ENCODE measurements at regions of chr6 and their contacts with region 1.

Region 1: GRCh38 chr6:140052756-140053729 is 678.6 kb upstream of the CITED2 start:
- DNase-seq: peak; percentile 79
- H3K4me3 ChIP-seq: no peak overlapping the region
- H3K27ac ChIP-seq: peak overlapping the region; percentile 98
- H3K4me1 ChIP-seq: peaks cover 50% of the 10 kb centered on the region
- H3K27me3 ChIP-seq: no peaks in the 10 kb centered on the region
- CTCF ChIP-seq: peak; percentile 71

Region 2: DNA sequence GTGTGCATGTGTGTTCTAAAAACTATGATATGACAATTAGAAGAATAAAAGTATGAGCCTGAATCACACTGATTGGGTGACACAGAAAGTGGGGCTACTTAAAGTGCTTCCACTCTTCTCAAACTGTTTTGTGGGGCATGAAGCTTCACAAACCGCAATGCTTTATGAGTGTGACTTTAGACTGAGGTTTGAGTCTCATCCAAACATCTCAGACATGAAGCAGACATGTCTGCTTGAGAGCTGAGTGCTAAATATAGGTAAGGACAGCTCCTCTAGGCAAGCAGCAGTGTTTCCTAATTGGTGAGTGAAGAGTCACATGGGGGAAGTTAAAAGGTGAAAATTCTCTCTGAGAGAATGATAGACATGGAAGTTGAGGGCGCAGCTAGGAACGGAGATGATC is 48.3 kb after region 1 on chr6:
- CTCF ChIA-PET with region 1: no interaction called
- POLR2A ChIA-PET with region 1: interaction called, 16 read pairs
- intact Hi-C with region 1: no loop called
- DNase-seq: no peak
- H3K4me3 ChIP-seq: no peak overlapping the region
- H3K27ac ChIP-seq: no peak overlapping the region
- H3K4me1 ChIP-seq: peaks cover 10% of the 10 kb centered on the region
- H3K27me3 ChIP-seq: no peaks in the 10 kb centered on the region
- CTCF ChIP-seq: no peak

Region 3: DNA sequence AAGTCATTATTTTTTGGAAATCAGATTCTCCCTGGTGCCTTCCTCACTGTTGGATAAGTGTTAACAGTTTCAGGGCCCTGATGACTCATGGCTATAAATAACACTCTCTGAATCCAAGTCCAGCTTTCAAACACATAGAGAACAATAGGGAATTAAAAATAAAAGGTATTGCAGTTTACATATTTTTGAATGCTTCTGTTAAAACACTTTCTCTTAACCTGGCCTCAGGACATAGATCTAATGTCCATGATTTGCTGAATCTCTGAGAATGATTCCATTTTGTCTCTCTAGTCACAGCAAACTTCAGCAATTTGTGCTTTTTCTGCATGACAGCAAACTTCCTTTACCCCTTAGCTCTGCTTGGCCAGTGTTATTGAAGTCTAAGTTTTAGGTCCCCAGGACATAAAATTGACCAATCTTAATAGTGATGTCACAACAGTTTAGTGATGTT is 513.8 kb after region 1 on chr6:
- CTCF ChIA-PET with region 1: no interaction called
- POLR2A ChIA-PET with region 1: no interaction called
- intact Hi-C with region 1: loop called (anchors 10 kb)
- DNase-seq: peak; percentile 60
- H3K4me3 ChIP-seq: no peak overlapping the region
- H3K27ac ChIP-seq: peak overlapping the region; percentile 15
- H3K4me1 ChIP-seq: peaks cover 29% of the 10 kb centered on the region
- H3K27me3 ChIP-seq: no peaks in the 10 kb centered on the region
- CTCF ChIP-seq: no peak

Region 4: GRCh38 chr6:140636908-140637402 is 583.9 kb after region 1 on chr6:
- CTCF ChIA-PET with region 1: no interaction called
- POLR2A ChIA-PET with region 1: no interaction called
- intact Hi-C with region 1: loop called (anchors 10 kb)
- DNase-seq: no peak
- H3K4me3 ChIP-seq: peak overlapping the region; percentile 18
- H3K27ac ChIP-seq: peak overlapping the region; percentile 87
- H3K4me1 ChIP-seq: peaks cover 19% of the 10 kb centered on the region
- H3K27me3 ChIP-seq: no peaks in the 10 kb centered on the region
- CTCF ChIP-seq: no peak

Region 5: DNA sequence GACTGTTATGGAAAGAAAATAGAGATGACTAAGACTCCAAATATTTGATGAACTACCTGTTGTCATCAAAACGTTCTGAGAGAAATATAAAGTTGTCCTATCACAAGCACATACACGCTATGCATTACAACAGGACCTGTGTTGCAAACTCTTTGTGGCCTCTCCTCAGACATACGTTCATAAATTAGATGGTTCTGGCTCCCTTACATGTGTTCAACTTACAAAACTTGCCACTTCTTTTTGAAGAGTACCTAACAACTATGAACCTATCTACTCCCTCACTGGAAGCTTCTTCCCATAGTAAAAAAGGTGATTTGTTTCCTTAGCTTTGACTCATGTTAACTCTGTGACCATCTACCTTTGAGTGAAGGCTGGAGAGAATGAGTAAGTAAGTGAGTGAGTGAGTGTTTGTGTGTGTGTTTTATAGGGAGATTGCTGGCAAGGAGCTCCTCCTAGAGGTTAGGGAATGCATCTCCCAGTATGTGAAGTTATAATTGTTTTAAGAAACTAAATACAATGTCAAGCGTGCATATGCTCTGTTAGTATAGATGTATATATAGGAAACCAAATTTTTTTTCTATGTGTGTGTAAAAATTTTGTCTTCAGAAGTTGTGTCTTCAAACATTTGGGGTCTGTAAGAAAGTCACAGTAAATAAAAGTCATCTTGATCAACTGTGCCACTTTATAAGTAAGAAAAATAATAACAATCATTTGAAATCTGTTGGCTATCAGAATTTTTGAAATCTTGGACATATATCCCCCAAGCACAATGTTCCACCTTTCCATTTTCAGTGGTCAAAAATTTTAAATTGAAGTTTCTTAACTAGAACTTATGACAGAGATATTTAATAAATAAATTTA is 868.6 kb after region 1 on chr6:
- CTCF ChIA-PET with region 1: no interaction called
- POLR2A ChIA-PET with region 1: no interaction called
- intact Hi-C with region 1: loop called (anchors 2 kb)
- DNase-seq: peak; percentile 84
- H3K4me3 ChIP-seq: no peak overlapping the region
- H3K27ac ChIP-seq: peak overlapping the region; percentile 24
- H3K4me1 ChIP-seq: peaks cover 10% of the 10 kb centered on the region
- H3K27me3 ChIP-seq: no peaks in the 10 kb centered on the region
- CTCF ChIP-seq: peak; percentile 84

Measured in A673 (cell line).